ENCODE measurements at regions of chr17 and their contacts with region 1.

Region 1: DNA sequence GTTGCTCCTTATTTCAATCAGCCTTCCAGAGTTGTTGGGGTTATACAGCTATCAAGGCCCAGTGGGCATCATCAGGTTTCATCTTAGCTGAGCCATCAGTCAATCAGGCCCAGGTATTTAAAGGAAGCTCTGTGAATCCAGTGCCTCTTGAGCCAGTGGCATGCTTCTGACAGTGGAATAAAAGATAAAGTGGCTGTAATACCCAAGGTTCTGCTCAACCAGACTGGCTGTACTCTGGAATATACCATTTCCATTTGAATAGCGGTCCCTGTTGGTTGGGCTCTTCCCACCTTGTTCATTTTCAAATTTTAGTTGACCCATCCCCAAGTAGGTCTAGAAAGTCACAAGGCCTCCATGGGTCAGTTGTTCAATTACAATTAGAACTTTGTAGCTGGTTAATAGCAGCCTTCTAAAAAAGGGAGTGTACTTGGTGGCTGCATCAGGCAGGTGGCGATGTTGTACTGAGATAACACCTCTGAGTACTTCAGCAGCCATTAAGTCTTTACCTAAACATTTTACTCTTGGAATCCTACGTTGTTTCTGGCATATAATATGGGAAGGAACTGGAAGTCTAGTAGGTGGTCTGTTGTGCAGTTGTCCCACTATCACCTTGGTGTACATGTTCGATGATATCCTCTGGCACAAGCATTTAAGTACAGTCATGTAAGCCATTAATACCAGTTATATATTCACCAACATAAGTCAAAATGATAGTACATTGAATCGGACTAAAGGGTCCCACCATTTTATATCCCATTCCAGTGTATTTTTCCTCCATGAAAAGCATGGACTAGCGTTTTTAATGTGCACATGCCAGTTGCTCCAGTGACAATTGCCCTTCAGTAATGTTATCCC is 294.1 kb downstream of the BCAS3 start:
- DNase-seq: peak; percentile 56
- H3K4me3 ChIP-seq: no peak overlapping the region
- H3K27ac ChIP-seq: no peak overlapping the region
- H3K4me1 ChIP-seq: no peaks in the 10 kb centered on the region
- H3K27me3 ChIP-seq: no peaks in the 10 kb centered on the region
- CTCF ChIP-seq: peak; percentile 57 to 69
- POLR2A ChIP-seq: no peak

Region 2: DNA sequence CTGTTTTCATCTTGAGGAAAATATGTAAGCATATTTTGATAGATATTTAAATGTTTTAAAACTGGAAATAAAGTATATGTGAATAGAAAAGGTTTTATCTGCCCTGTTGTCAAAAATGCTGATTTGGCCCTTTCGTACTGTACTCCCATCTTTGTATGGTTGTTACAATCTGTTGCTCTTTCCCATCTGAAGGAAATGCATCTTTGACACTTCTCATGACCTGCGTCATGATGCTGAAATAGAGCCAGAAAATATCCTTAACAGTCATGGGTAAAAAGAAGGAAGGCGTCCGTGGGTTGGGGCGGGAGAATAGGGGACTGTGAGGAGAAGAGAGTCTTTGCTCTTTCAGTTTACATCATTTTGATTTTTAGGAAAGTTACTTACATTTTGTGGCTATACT is 33.6 kb after region 1 on chr17:
- CTCF ChIA-PET with region 1: no interaction called
- POLR2A ChIA-PET with region 1: no interaction called
- dilution Hi-C with region 1: no loop called
- intact Hi-C with region 1: no loop called
- DNase-seq: no peak
- H3K4me3 ChIP-seq: no peak overlapping the region
- H3K27ac ChIP-seq: no peak overlapping the region
- H3K4me1 ChIP-seq: no peaks in the 10 kb centered on the region
- H3K27me3 ChIP-seq: peaks cover 1 to 6% of the 10 kb centered on the region in 2 experiments
- CTCF ChIP-seq: no peak
- POLR2A ChIP-seq: no peak

Region 3: DNA sequence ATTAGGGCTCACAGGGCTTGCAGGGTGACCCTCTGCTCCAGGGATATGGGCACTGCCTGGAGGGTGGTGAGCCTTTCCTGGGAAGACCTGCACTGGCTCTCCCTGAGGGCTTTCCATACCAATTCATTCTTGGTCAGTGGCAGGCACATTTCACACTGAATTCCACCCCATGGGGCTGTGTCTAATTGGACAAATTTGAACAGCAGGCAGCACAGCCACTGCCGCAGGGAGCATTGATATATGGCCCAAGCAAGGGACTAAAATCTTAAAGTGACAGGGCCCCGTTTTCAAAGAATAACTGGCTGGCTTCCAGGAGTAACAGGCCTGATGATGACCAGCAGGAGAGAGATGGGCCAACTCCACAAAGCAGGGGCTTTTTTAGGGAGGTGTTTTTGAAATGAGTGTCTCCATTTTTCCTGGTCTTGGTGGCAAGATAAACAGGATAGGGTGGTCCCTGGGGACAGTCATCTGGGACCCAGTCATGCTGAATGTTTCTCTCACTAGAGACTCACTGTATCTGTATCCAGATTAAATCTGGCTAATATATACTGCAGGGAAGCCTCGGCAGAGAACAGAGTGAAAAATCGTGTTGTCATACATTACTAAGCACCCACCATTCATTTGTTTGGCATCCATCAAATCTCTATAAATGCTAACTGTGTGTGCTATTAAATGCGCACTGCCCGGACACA is 353.8 kb after region 1 on chr17:
- CTCF ChIA-PET with region 1: no interaction called
- POLR2A ChIA-PET with region 1: no interaction called
- dilution Hi-C with region 1: no loop called
- intact Hi-C with region 1: no loop called
- DNase-seq: no peak
- H3K4me3 ChIP-seq: no peak overlapping the region
- H3K27ac ChIP-seq: no peak overlapping the region
- H3K4me1 ChIP-seq: no peaks in the 10 kb centered on the region
- H3K27me3 ChIP-seq: no peaks in the 10 kb centered on the region
- CTCF ChIP-seq: no peak
- POLR2A ChIP-seq: no peak

Region 4: GRCh38 chr17:61361084-61361483 is 389.3 kb after region 1 on chr17:
- CTCF ChIA-PET with region 1: interaction called, 11 read pairs
- POLR2A ChIA-PET with region 1: no interaction called
- dilution Hi-C with region 1: no loop called
- intact Hi-C with region 1: no loop called
- DNase-seq: no peak
- H3K4me3 ChIP-seq: no peak overlapping the region
- H3K27ac ChIP-seq: no peak overlapping the region
- H3K4me1 ChIP-seq: no peaks in the 10 kb centered on the region
- H3K27me3 ChIP-seq: peaks cover 4 to 12% of the 10 kb centered on the region in 2 experiments
- CTCF ChIP-seq: no peak
- POLR2A ChIP-seq: no peak

Region 5: GRCh38 chr17:61389670-61390478 is 418.1 kb after region 1 on chr17:
- CTCF ChIA-PET with region 1: interaction called, 13 read pairs
- POLR2A ChIA-PET with region 1: no interaction called
- dilution Hi-C with region 1: no loop called
- intact Hi-C with region 1: loop called (anchors 1 kb)
- DNase-seq: peak; percentile 39
- H3K4me3 ChIP-seq: no peak overlapping the region
- H3K27ac ChIP-seq: no peak overlapping the region
- H3K4me1 ChIP-seq: no peaks in the 10 kb centered on the region
- H3K27me3 ChIP-seq: peaks cover 7% of the 10 kb centered on the region in 2 experiments
- CTCF ChIP-seq: peak; percentile 93 to 94
- POLR2A ChIP-seq: no peak

Measured in endothelial cell of umbilical vein (primary cell).